Activated CD8-positive, alpha-beta T cell treated with anti-CD3 and anti-CD28 coated beads for 36 hours (primary cell): ENCODE measurements at regions of chr22 and their contacts with region 1.

Region 1: DNA sequence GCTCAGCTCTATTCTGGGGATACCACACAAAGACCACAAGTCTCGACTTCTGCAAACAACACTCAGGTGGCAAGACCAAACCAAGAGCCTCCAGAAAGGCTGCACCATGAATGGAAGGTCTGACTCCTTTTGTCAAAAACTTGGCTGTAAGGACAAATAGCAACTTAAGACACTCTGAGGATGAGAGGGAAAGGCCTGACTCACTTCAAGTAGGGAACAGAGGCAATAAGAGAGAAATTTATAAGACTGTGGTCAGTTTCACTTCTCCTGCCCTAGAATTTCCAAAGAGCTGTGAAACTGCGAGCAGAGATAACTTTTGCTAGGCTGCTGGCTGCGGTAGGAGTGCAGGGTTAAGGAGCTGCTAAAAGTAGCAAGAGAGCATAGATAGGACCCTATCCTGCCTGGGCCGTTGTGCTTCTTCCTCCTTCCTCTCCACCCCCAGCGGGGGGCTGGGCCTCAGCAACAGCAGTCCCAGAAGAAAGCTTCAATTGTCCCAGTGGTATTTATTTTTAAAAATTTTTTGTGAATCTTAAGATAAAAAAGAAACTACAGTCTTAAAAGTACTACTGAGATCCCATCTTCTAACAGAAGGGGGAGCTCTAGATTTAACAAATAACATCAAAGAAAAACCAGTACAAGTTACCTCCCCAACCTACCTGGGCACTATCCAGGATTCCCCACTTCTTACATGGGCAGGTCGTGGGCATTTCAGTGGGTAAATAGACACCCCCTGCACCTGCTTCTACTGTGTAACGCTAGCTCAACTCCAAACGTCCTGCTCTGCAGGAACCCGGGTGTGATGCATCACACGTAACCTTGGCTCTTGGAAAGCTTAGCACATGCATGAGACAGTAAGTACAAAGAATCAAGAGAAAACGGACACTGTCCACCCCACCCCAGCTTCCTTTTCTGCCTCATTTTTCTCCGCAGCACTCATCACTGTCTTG is 66.4 kb downstream of the SGSM3 start:
- DNase-seq: peak; percentile 50
- ATAC-seq: peak; percentile 71
- H3K4me3 Mint-ChIP-seq: peak overlapping the region; percentile 17
- H3K27ac Mint-ChIP-seq: peak overlapping the region; percentile 83
- H3K4me1 Mint-ChIP-seq: peaks cover 61% of the 10 kb centered on the region
- H3K27me3 Mint-ChIP-seq: no peaks in the 10 kb centered on the region
- CTCF ChIP-seq: peak; percentile 78

Region 2: GRCh38 chr22:39880722-39881121 is 556.1 kb before region 1 on chr22:
- CTCF ChIA-PET with region 1: no interaction called
- POLR2A ChIA-PET with region 1: no interaction called
- intact Hi-C with region 1: no loop called
- DNase-seq: no peak
- ATAC-seq: no peak
- H3K4me3 Mint-ChIP-seq: no peak overlapping the region
- H3K27ac Mint-ChIP-seq: no peak overlapping the region
- H3K4me1 Mint-ChIP-seq: peaks cover 7% of the 10 kb centered on the region
- H3K27me3 Mint-ChIP-seq: no peaks in the 10 kb centered on the region
- CTCF ChIP-seq: no peak

Region 3: GRCh38 chr22:40426594-40427333 is 10.0 kb before region 1 on chr22:
- CTCF ChIA-PET with region 1: interaction called, 34 read pairs
- POLR2A ChIA-PET with region 1: interaction called, 5 read pairs
- intact Hi-C with region 1: no loop called
- DNase-seq: no peak
- ATAC-seq: no peak
- H3K4me3 Mint-ChIP-seq: no peak overlapping the region
- H3K27ac Mint-ChIP-seq: peak overlapping the region; percentile 25
- H3K4me1 Mint-ChIP-seq: peaks cover 3% of the 10 kb centered on the region
- H3K27me3 Mint-ChIP-seq: no peaks in the 10 kb centered on the region
- CTCF ChIP-seq: no peak

Region 4: GRCh38 chr22:40469181-40469580 is 32.4 kb after region 1 on chr22:
- CTCF ChIA-PET with region 1: interaction called, 40 read pairs
- POLR2A ChIA-PET with region 1: interaction called, 4 read pairs
- intact Hi-C with region 1: no loop called
- DNase-seq: no peak
- ATAC-seq: no peak
- H3K4me3 Mint-ChIP-seq: no peak overlapping the region
- H3K27ac Mint-ChIP-seq: no peak overlapping the region
- H3K4me1 Mint-ChIP-seq: peaks cover 26% of the 10 kb centered on the region
- H3K27me3 Mint-ChIP-seq: no peaks in the 10 kb centered on the region
- CTCF ChIP-seq: no peak

Region 5: GRCh38 chr22:40519284-40519947 is 82.6 kb after region 1 on chr22:
- CTCF ChIA-PET with region 1: interaction called, 18 read pairs
- POLR2A ChIA-PET with region 1: no interaction called
- intact Hi-C with region 1: no loop called
- DNase-seq: peak; percentile 22
- ATAC-seq: peak; percentile 89
- H3K4me3 Mint-ChIP-seq: peak overlapping the region; percentile 67
- H3K27ac Mint-ChIP-seq: peak overlapping the region; percentile 96
- H3K4me1 Mint-ChIP-seq: peaks cover 36% of the 10 kb centered on the region
- H3K27me3 Mint-ChIP-seq: no peaks in the 10 kb centered on the region
- CTCF ChIP-seq: no peak

Region 6: DNA sequence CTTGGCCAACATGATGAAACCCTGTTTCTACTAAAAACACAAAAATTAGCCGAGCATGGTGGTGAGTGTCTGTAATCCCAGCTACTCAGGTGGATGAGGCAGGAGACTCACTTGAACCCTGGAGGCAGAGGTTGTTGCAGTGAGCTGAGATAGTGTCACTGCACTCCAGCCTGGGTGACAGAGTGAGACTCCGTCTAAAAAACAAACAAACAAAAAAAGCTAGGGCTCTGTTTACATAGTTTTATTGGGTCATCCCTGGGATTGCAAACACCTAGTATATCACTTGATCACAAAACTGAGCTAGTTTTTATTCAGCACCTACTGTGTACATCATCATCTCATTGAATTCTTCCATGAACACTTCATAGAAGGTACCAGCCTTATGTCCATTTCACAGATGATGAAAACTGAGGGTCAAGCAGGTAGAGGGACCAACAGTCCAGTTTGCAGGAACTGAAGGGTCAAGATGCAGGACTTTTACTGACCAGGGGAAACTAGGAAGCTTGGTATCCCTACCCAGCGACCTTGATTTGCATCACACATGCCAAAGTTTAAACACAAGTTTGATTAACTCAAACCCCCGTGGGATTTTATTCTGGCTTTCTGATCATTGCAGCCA is 208.9 kb after region 1 on chr22:
- CTCF ChIA-PET with region 1: interaction called, 127 read pairs
- POLR2A ChIA-PET with region 1: no interaction called
- intact Hi-C with region 1: loop called (anchors 5 kb)
- DNase-seq: no peak
- ATAC-seq: no peak
- H3K4me3 Mint-ChIP-seq: no peak overlapping the region
- H3K27ac Mint-ChIP-seq: no peak overlapping the region
- H3K4me1 Mint-ChIP-seq: no peaks in the 10 kb centered on the region
- H3K27me3 Mint-ChIP-seq: no peaks in the 10 kb centered on the region
- CTCF ChIP-seq: no peak